Left cardiac atrium (tissue), 4 donors: ENCODE measurements at regions of chr6 and their contacts with region 1.

Region 1: DNA sequence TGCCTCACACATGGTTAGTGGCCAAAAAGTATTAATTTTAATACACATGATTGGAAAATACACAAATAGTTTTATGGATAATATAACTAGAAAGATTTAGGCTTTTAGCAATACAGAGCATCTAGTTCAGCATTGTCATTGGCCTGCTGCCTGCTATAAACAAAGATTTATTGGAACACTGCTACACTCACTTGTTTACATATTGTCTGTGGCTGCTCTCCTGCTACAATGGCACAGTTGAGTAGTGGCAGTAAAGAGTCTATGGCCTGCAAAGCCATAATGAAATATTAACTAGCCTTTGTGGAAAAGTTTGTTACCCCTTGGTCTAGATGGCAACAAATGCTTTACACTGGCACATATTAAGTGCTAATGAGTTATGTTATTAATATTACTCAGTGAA is 37.8 kb downstream of the ZNF451 start:
- DNase-seq: no peak
- ATAC-seq: no peak

Region 2: GRCh38 chr6:57221936-57222742 is 94.4 kb after region 1 on chr6 and contains the start of gene RAB23:
- intact Hi-C with region 1: loop called in 1 of 2 experiments (anchors 10 kb)
- DNase-seq: peak; percentile 86
- ATAC-seq: peak; percentile 99
- total RNA-seq, gene RAB23: 10.7 to 13.8 TPM